GM12878 (cell line): ENCODE measurements at regions of chr11 and their contacts with region 1.

Region 1: GRCh38 chr11:61747192-61747966 is 5.1 kb upstream of the MYRF start:
- DNase-seq: no peak
- ATAC-seq: peak; percentile 93
- H3K4me3 ChIP-seq: no peak overlapping the region
- H3K27ac ChIP-seq: no peak overlapping the region
- H3K4me1 ChIP-seq: no peaks in the 10 kb centered on the region; the same call in 1 of the 2 replicates
- H3K27me3 ChIP-seq: peaks cover 0 to 4% of the 10 kb centered on the region in 2 experiments; a peak in 1 of 4 replicates
- CTCF ChIP-seq: peak; percentile 75 to 96 (median 96)
- EP300 ChIP-seq: no peak
- POLR2A ChIP-seq: no peak
- RAD21 ChIP-seq: peak; percentile 55

Region 2: DNA sequence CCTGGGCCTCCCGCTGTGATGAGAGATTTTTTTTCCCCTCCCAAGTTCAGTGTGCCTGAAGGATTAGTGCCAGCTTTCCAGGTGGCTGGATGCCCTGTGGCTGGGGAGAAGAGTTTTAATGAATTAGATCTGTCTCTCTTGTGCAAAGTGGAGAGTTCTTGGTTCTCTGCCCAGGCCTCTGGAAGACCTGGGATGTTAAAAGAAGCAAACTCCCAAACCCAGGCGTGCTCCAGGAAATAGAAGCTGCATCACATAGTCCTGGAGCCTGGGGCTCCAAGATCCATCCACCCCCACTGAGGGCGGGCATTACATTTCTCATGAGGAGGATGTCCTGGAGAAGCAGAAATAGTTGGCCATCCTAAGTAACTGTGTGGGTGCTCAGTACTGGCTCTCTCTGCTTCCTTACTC is 286.9 kb before region 1 on chr11:
- CTCF ChIA-PET with region 1: no interaction called
- POLR2A ChIA-PET with region 1: no interaction called
- RAD21 ChIA-PET with region 1: no interaction called
- SMC1A ChIA-PET with region 1: no interaction called
- in situ Hi-C with region 1: no loop called
- intact Hi-C with region 1: no loop called
- DNase-seq: no peak
- ATAC-seq: no peak
- H3K4me3 ChIP-seq: no peak overlapping the region
- H3K27ac ChIP-seq: no peak overlapping the region
- H3K4me1 ChIP-seq: no peaks in the 10 kb centered on the region
- H3K27me3 ChIP-seq: no peaks in the 10 kb centered on the region
- CTCF ChIP-seq: no peak
- EP300 ChIP-seq: no peak
- POLR2A ChIP-seq: no peak
- RAD21 ChIP-seq: no peak

Region 3: GRCh38 chr11:61733120-61733978 is 14.0 kb before region 1 on chr11:
- CTCF ChIA-PET with region 1: interaction called, 15 read pairs
- POLR2A ChIA-PET with region 1: no interaction called
- RAD21 ChIA-PET with region 1: interaction called, 5 read pairs
- SMC1A ChIA-PET with region 1: interaction called, 3 read pairs
- in situ Hi-C with region 1: no loop called
- intact Hi-C with region 1: no loop called
- DNase-seq: peak; percentile 12
- ATAC-seq: peak; percentile 95
- H3K4me3 ChIP-seq: no peak overlapping the region
- H3K27ac ChIP-seq: no peak overlapping the region
- H3K4me1 ChIP-seq: no peaks in the 10 kb centered on the region
- H3K27me3 ChIP-seq: no peaks in the 10 kb centered on the region; a peak in 1 of 4 replicates
- CTCF ChIP-seq: peak; percentile 99
- EP300 ChIP-seq: no peak
- POLR2A ChIP-seq: no peak
- RAD21 ChIP-seq: peak; percentile 80

Region 4: DNA sequence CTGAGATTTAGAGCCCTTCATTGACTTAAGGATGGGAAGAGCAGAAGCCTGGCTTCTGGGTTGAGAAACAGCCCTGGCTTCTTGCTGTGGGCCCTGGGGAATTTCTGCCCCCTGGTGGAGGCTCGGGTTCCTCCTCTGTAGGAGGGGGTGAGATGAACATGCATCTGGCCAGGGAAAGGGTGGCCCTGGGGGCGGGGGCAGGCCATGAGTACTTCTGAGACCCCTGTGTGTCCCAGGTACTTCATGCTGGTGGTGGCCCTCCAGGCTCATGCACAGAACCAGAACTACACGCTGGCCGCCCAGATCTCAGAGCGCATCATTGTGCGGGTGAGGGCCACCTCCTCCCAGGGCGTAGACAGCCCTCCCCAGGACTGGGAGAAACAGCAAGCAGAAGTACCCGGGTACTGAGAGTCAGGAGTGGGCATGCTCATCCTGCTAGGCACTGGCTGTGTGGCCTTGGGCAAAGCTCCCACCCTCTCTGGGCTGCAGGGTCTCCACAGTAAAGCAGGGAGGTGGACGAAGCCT is 29.2 kb after region 1 on chr11:
- CTCF ChIA-PET with region 1: interaction called, 88 read pairs
- POLR2A ChIA-PET with region 1: interaction called, 6 read pairs
- RAD21 ChIA-PET with region 1: interaction called, 15 read pairs
- SMC1A ChIA-PET with region 1: interaction called, 7 read pairs
- in situ Hi-C with region 1: loop called (anchors 5 kb)
- intact Hi-C with region 1: loop called (anchors 1 kb)
- DNase-seq: no peak
- ATAC-seq: peak; percentile 94
- H3K4me3 ChIP-seq: no peak overlapping the region
- H3K27ac ChIP-seq: no peak overlapping the region
- H3K4me1 ChIP-seq: no peaks in the 10 kb centered on the region; the same call in 1 of the 2 replicates
- H3K27me3 ChIP-seq: no peaks in the 10 kb centered on the region
- CTCF ChIP-seq: peak; percentile 71 to 86 (median 83)
- EP300 ChIP-seq: no peak
- POLR2A ChIP-seq: no peak
- RAD21 ChIP-seq: peak; percentile 80

Region 5: DNA sequence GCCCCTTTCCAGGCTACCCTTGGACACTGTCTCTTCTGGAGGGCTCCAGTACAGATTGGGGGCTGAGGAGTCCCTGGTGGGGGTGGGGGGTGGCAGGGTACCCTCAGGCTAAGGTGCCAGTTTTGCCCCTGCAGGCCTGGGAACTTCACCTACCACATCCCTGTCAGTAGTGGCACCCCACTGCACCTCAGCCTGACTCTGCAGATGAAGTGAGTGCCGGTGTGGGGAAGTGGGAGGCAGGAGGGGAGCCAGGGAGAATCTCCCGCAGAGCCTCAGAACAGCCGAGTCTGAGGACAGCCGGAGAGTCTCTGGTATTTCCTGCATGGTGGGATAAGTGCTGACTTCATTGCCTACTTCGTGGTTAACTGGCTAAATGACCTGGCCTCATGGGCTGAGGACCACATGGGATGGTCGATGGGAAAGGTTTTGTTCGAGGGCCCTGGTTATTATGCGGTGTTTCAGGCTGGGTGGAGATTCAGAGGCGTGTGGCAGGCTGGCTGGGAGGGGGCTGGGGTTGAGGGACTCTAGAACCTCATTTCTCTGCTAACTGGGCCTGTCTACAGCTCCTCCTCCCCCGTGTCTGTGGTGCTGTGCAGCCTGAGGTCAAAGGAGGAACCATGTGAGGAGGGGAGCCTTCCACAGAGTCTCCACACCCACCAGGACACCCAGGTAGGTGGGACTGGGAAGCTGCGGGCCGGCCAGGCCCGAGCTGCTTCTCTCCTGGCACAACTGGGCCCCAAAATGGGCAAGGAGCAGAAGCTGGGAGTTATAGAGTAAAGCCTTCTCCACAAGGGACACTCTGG is 36.5 kb after region 1 on chr11:
- CTCF ChIA-PET with region 1: interaction called, 200 read pairs
- POLR2A ChIA-PET with region 1: interaction called, 60 read pairs
- RAD21 ChIA-PET with region 1: interaction called, 26 read pairs
- SMC1A ChIA-PET with region 1: interaction called, 91 read pairs
- in situ Hi-C with region 1: loop called (anchors 5 kb)
- intact Hi-C with region 1: no loop called
- DNase-seq: no peak
- ATAC-seq: no peak
- H3K4me3 ChIP-seq: no peak overlapping the region
- H3K27ac ChIP-seq: no peak overlapping the region
- H3K4me1 ChIP-seq: no peaks in the 10 kb centered on the region; the same call in 1 of the 2 replicates
- H3K27me3 ChIP-seq: no peaks in the 10 kb centered on the region
- CTCF ChIP-seq: no peak
- EP300 ChIP-seq: no peak
- POLR2A ChIP-seq: no peak
- RAD21 ChIP-seq: no peak

Region 6: DNA sequence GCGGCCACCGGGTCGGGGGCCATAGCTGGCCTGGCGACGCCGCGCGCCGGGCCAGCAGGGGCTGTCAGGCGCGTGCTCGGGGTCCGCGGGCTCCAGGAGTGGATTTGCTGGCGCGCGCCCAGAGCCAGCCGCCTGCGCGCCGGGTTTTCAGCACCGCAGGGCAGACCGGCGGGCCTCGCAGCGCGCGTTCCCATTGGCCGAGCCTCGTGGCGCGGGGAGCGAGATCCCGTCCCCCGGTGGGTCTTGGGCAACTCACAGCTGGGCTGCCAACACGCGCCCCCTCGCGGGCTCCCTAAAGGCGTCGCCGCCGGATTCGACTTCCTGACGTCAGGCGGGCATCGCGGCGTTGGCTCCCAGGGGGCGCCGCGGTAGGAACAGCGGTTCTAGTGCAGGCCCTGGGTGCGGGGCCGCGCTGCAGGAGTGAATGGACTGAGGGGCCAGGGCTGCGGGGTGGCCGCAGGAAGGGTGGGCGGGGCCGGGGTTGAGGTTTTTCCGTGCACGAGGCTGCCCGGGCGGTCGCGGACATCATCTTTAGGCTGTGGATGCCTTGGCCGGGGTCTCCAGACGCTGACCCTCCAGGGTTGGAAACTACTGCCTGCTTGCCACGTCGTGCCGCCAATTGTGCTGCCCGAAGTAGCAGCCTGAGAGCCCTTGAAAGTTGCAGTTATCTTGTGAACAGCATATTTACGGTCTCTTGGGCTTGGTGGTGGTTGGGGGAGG is 69.5 kb after region 1 on chr11 and contains the start of gene FADS1:
- CTCF ChIA-PET with region 1: interaction called, 13 read pairs
- POLR2A ChIA-PET with region 1: no interaction called
- RAD21 ChIA-PET with region 1: interaction called, 5 read pairs
- SMC1A ChIA-PET with region 1: interaction called, 5 read pairs
- in situ Hi-C with region 1: no loop called
- intact Hi-C with region 1: no loop called
- DNase-seq: peak; percentile 60
- ATAC-seq: peak; percentile 71
- H3K4me3 ChIP-seq: peak within 1 kb of the TSS; percentile 81
- H3K27ac ChIP-seq: peak within 1 kb of the TSS; percentile 87
- H3K4me1 ChIP-seq: peaks cover 3% of the 10 kb centered on the region; the same call in 1 of the 2 replicates
- H3K27me3 ChIP-seq: no peaks in the 10 kb centered on the region
- CTCF ChIP-seq: peak; percentile 53 to 73 (median 69)
- EP300 ChIP-seq: no peak
- POLR2A ChIP-seq: peak; percentile 60
- RAD21 ChIP-seq: no peak
- polyA plus RNA-seq, gene FADS1: 8.8 to 14.6 TPM

Region 7: GRCh38 chr11:62108017-62108750 is 360.8 kb after region 1 on chr11:
- CTCF ChIA-PET with region 1: interaction called, 6 read pairs
- POLR2A ChIA-PET with region 1: no interaction called
- RAD21 ChIA-PET with region 1: no interaction called
- SMC1A ChIA-PET with region 1: interaction called, 3 read pairs
- in situ Hi-C with region 1: no loop called
- intact Hi-C with region 1: loop called (anchors 5 kb)
- DNase-seq: peak; percentile 11
- ATAC-seq: peak; percentile 79
- H3K4me3 ChIP-seq: no peak overlapping the region
- H3K27ac ChIP-seq: no peak overlapping the region
- H3K4me1 ChIP-seq: no peaks in the 10 kb centered on the region
- H3K27me3 ChIP-seq: no peaks in the 10 kb centered on the region
- CTCF ChIP-seq: peak; percentile 59 to 82 (median 80)
- EP300 ChIP-seq: no peak
- POLR2A ChIP-seq: no peak
- RAD21 ChIP-seq: peak; percentile 91